ENCODE measurements at regions of chr15 and their contacts with region 1.

Region 1: GRCh38 chr15:55267401-55268175 is 22.0 kb downstream of the RAB27A start:
- DNase-seq: peak; percentile 51 to 88 (median 82)
- ATAC-seq: peak; percentile 90 to 92
- H3K4me3 Mint-ChIP-seq: peak overlapping the region; percentile 67 to 86 (median 80)
- H3K27ac Mint-ChIP-seq: peak overlapping the region; percentile 92 to 99 (median 98)
- H3K4me1 Mint-ChIP-seq: peaks cover 30 to 77% (median 69%) of the 10 kb centered on the region in 4 donors
- H3K27me3 Mint-ChIP-seq: no peaks in the 10 kb centered on the region

Region 2: GRCh38 chr15:55196458-55197361 is 70.9 kb before region 1 on chr15 and contains the start of gene RSL24D1:
- POLR2A ChIA-PET with region 1: interaction called, 23 read pairs
- DNase-seq: peak; percentile 88 to 99 (median 96)
- ATAC-seq: peak; percentile 95 to 97
- H3K4me3 Mint-ChIP-seq: no peak within 1 kb of the TSS
- H3K27ac Mint-ChIP-seq: no peak within 1 kb of the TSS
- H3K4me1 Mint-ChIP-seq: peaks cover 9 to 19% (median 13%) of the 10 kb centered on the region in 4 donors
- H3K27me3 Mint-ChIP-seq: no peaks in the 10 kb centered on the region
- polyA plus RNA-seq, gene RSL24D1: 78.8 to 116 (median 93.2) TPM

Region 3: DNA sequence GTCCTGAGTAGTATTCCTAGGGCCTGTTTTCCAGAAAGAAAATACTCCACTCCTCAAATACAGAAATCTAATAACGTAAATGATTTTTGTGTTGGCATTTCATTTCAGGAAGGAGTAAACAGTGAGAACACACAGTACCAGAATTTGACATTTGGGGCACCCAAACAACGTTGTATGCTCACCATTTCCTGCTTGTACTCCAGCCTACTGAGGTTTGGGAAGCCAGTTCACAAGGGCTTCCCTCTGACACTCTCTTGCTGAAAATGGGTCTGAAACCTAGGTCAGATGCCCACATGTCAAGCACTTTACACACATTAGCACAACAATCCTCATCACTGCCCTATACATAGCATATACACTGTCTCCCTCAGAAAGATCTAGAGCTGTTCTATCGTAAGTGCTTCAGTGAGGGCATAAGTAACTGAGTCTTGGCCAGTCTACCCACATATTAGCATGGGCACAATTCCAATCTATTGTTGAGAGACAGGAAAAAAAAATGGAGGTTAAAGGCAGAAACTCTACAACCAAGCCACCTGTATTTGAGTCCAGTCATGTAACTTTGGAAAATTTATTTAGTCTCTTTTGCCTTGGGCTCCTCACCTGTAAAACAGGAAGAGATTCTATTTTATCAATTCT is 27.3 kb before region 1 on chr15:
- POLR2A ChIA-PET with region 1: no interaction called
- DNase-seq: peak in 1 of 10 donors; percentile 16
- ATAC-seq: peak in 1 of 2 donors; percentile 74
- H3K4me3 Mint-ChIP-seq: peak overlapping the region in 3 of 10 donors; percentile 42 to 63 (median 54)
- H3K27ac Mint-ChIP-seq: peak overlapping the region in 6 of 10 donors; percentile 0 to 88 (median 65)
- H3K4me1 Mint-ChIP-seq: peaks cover 10 to 34% (median 32%) of the 10 kb centered on the region in 4 donors
- H3K27me3 Mint-ChIP-seq: no peaks in the 10 kb centered on the region

Region 4: DNA sequence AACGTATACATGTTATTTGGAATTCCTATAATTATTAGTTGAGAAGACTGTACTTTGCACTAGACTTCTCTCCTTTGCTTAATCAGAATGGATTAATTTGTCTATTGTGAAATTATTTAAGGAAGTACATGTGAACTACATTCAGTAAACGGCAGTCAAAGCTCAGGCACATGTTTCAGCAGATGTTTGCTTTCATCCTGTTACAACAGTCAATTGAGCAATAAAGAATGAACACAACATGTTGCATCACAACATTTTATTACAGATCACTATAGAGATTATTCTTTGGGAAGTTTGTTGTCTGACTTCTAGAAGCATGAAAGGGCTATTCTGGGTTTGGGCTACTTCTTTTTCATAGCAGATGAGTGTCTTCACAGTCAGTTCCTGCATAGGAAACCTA is 17.2 kb before region 1 on chr15:
- POLR2A ChIA-PET with region 1: interaction called, 29 read pairs
- DNase-seq: no peak
- ATAC-seq: peak in 1 of 2 donors; percentile 6
- H3K4me3 Mint-ChIP-seq: peak overlapping the region in 9 of 10 donors; percentile 18 to 71 (median 61)
- H3K27ac Mint-ChIP-seq: peak overlapping the region; percentile 46 to 94 (median 84)
- H3K4me1 Mint-ChIP-seq: peaks cover 33 to 79% (median 61%) of the 10 kb centered on the region in 4 donors
- H3K27me3 Mint-ChIP-seq: no peaks in the 10 kb centered on the region

Region 5: DNA sequence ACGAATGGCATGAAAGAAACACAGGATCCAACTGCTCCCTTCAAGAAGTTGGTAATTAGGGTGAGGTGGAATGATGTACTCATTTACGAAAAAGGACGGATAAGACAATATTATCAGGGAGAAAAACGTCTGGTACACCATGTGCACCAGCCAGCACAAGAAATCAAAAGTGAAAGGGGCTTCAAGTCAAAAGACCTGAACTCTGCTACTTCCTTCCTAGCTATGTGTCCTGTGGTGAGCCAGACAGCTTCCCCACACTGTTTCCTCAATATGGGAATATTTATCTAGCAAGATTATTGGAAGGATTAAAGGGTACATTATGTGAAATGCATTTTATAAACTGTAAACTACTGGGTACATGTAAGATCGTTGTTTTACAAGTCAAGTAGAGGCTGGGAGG is 11.9 kb before region 1 on chr15:
- POLR2A ChIA-PET with region 1: interaction called, 29 read pairs
- DNase-seq: peak in 3 of 10 donors; percentile 49 to 50 (median 50)
- ATAC-seq: peak; percentile 67 to 75
- H3K4me3 Mint-ChIP-seq: peak overlapping the region; percentile 78 to 90 (median 87)
- H3K27ac Mint-ChIP-seq: peak overlapping the region; percentile 94 to 97 (median 95)
- H3K4me1 Mint-ChIP-seq: peaks cover 48 to 81% (median 72%) of the 10 kb centered on the region in 4 donors
- H3K27me3 Mint-ChIP-seq: no peaks in the 10 kb centered on the region

Region 6: DNA sequence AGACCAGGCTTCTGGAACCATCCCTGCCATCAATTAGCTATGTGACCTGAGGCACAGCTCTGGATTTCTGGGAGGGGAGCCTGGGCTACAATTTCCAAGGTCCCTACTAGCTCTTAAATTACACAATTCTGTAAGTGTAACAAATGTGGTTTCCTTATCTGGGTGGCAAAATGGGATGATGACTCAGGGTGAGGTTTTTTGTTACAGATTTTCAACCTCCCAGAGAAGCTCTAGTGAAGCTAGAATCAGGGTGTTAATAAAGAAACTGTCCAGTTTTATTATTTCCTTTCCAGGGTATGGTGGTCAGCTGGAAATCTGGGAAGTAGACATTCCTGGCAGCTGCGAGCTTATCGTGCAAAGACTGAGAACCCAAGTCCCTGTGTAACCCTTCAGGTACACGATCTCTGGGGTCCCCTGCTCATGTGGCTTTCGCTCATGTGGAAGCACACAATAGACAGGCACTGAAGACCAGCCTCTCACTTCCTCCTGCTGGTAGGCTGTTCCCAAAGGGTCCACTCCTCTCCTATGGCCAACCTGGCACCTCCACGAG is 14.8 kb after region 1 on chr15:
- POLR2A ChIA-PET with region 1: interaction called, 19 read pairs
- DNase-seq: peak in 1 of 10 donors; percentile 33
- ATAC-seq: no peak
- H3K4me3 Mint-ChIP-seq: peak overlapping the region in 5 of 10 donors; percentile 12 to 58 (median 55)
- H3K27ac Mint-ChIP-seq: peak overlapping the region; percentile 78 to 98 (median 90)
- H3K4me1 Mint-ChIP-seq: peaks cover 42 to 95% (median 90%) of the 10 kb centered on the region in 4 donors
- H3K27me3 Mint-ChIP-seq: no peaks in the 10 kb centered on the region

Measured in naive thymus-derived CD8-positive, alpha-beta T cell (primary cell).